Naive thymus-derived CD4-positive, alpha-beta T cell (primary cell): ENCODE measurements at regions of chr7 and their contacts with region 1.

Region 1: GRCh38 chr7:90244909-90245851 is at the start of gene CFAP69:
- DNase-seq: peak; percentile 79 to 88 (median 84)
- ATAC-seq: peak; percentile 95
- H3K4me3 ChIP-seq: peak within 1 kb of the TSS; percentile 70
- H3K4me3 Mint-ChIP-seq: peak within 1 kb of the TSS; percentile 88 to 97 (median 92)
- H3K27ac ChIP-seq: peak within 1 kb of the TSS; percentile 50
- H3K27ac Mint-ChIP-seq: peak within 1 kb of the TSS in 8 of 9 donors; percentile 19 to 90 (median 78)
- H3K4me1 ChIP-seq: peaks cover 6 to 8% of the 10 kb centered on the region in 2 donors
- H3K4me1 Mint-ChIP-seq: peaks cover 8 to 27% (median 15%) of the 10 kb centered on the region in 7 donors
- H3K27me3 ChIP-seq: no peaks in the 10 kb centered on the region
- H3K27me3 Mint-ChIP-seq: peaks cover 11 to 59% (median 28%) of the 10 kb centered on the region in 5 donors
- total RNA-seq, gene CFAP69: 0.30 to 0.80 TPM in 2 of 5 experiments, not detected in the others

Region 2: DNA sequence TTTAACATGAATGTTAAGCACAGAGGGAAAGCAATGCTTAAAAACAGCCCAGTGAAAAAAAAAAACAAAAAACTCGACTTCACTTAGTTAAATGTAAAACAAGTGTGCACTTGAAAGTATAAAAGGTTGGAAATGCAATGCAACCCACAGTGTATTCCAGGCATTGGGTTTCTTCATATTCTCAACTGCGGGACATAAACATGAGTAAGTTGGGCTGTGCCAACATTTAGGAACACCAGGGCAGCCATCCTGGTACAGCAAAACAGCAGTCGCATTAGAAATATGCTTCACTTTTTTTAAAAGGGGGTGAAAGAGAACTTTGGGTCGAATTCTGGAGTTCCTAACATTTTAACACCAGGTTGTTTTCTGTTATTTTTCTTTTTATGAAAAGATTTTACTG is 90.0 kb before region 1 on chr7:
- CTCF ChIA-PET with region 1: no interaction called
- POLR2A ChIA-PET with region 1: no interaction called
- intact Hi-C with region 1: loop called (anchors 5 kb)
- DNase-seq: no peak
- ATAC-seq: no peak
- H3K4me3 ChIP-seq: no peak overlapping the region
- H3K4me3 Mint-ChIP-seq: peak overlapping the region in 3 of 10 donors; percentile 55 to 64 (median 59)
- H3K27ac ChIP-seq: no peak overlapping the region
- H3K27ac Mint-ChIP-seq: no peak overlapping the region
- H3K4me1 ChIP-seq: no peaks in the 10 kb centered on the region
- H3K4me1 Mint-ChIP-seq: peaks cover 0 to 7% (median 2%) of the 10 kb centered on the region in 7 donors
- H3K27me3 ChIP-seq: no peaks in the 10 kb centered on the region
- H3K27me3 Mint-ChIP-seq: peaks cover 11 to 39% (median 30%) of the 10 kb centered on the region in 5 donors

Region 3: DNA sequence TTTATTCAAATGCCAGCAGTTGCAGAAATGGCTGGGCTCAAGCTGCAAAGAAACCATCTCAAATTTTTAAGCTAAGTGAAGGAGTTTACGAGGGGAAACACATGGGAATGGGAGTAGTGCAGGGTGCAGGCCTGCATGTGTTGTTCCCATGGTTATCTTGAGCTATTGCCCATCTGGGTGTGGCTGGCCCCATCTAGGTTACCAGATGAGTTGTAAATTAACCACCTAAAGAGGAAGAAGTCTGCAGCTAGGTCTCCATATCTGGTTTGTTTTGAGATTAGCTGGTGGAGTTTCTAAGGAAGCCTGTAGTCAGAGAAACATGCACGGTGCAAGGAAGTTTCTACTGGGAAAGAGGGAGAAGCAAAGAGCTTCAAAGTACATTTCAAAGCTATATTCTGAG is 56.9 kb before region 1 on chr7:
- CTCF ChIA-PET with region 1: no interaction called
- POLR2A ChIA-PET with region 1: no interaction called
- intact Hi-C with region 1: no loop called
- DNase-seq: no peak
- ATAC-seq: no peak
- H3K4me3 ChIP-seq: no peak overlapping the region
- H3K4me3 Mint-ChIP-seq: no peak overlapping the region
- H3K27ac ChIP-seq: no peak overlapping the region
- H3K27ac Mint-ChIP-seq: no peak overlapping the region
- H3K4me1 ChIP-seq: no peaks in the 10 kb centered on the region
- H3K4me1 Mint-ChIP-seq: no peaks in the 10 kb centered on the region
- H3K27me3 ChIP-seq: no peaks in the 10 kb centered on the region
- H3K27me3 Mint-ChIP-seq: peaks cover 0 to 4% (median 0%) of the 10 kb centered on the region in 5 donors

Region 4: DNA sequence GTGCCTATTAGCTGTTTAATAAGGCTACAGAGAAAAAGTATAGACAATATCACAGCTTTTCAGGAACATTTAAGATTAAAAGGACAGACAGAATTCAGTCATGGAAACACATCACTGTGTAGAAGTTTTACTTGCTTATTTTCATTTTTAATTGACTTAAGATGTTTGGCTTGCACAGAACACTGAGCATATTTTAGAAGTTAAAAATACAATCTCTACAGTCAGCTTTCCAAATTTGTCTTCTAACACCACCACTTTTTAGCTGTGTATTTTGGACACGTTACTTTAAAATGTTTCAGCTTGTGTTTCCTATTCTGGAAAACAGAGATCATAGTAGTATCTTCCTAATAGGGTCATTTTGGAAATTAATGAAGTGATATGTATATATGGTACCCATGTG is 11.6 kb after region 1 on chr7:
- CTCF ChIA-PET with region 1: no interaction called
- POLR2A ChIA-PET with region 1: no interaction called
- intact Hi-C with region 1: loop called in 1 of 2 experiments (anchors 1 kb)
- DNase-seq: no peak
- ATAC-seq: no peak
- H3K4me3 ChIP-seq: no peak overlapping the region
- H3K4me3 Mint-ChIP-seq: no peak overlapping the region
- H3K27ac ChIP-seq: no peak overlapping the region
- H3K27ac Mint-ChIP-seq: no peak overlapping the region
- H3K4me1 ChIP-seq: no peaks in the 10 kb centered on the region
- H3K4me1 Mint-ChIP-seq: no peaks in the 10 kb centered on the region
- H3K27me3 ChIP-seq: no peaks in the 10 kb centered on the region
- H3K27me3 Mint-ChIP-seq: peaks cover 19 to 40% (median 26%) of the 10 kb centered on the region in 5 donors

Region 5: GRCh38 chr7:90262438-90262837 is 17.3 kb after region 1 on chr7:
- CTCF ChIA-PET with region 1: no interaction called
- POLR2A ChIA-PET with region 1: no interaction called
- intact Hi-C with region 1: loop called in 1 of 2 experiments (anchors 2 kb)
- DNase-seq: peak in 1 of 9 donors; percentile 4
- ATAC-seq: no peak
- H3K4me3 ChIP-seq: no peak overlapping the region
- H3K4me3 Mint-ChIP-seq: no peak overlapping the region
- H3K27ac ChIP-seq: no peak overlapping the region
- H3K27ac Mint-ChIP-seq: no peak overlapping the region
- H3K4me1 ChIP-seq: no peaks in the 10 kb centered on the region
- H3K4me1 Mint-ChIP-seq: no peaks in the 10 kb centered on the region
- H3K27me3 ChIP-seq: no peaks in the 10 kb centered on the region
- H3K27me3 Mint-ChIP-seq: peaks cover 6 to 27% (median 13%) of the 10 kb centered on the region in 5 donors

Region 6: GRCh38 chr7:90346336-90347125 is 101.4 kb after region 1 on chr7 and contains the start of gene GTPBP10:
- CTCF ChIA-PET with region 1: no interaction called
- POLR2A ChIA-PET with region 1: no interaction called
- intact Hi-C with region 1: loop called (anchors 1 kb)
- DNase-seq: peak; percentile 88 to 96 (median 94)
- ATAC-seq: peak; percentile 99
- H3K4me3 ChIP-seq: peak within 1 kb of the TSS; percentile 83
- H3K4me3 Mint-ChIP-seq: peak within 1 kb of the TSS; percentile 93 to 99 (median 98)
- H3K27ac ChIP-seq: peak within 1 kb of the TSS; percentile 95
- H3K27ac Mint-ChIP-seq: peak within 1 kb of the TSS; percentile 96 to 100 (median 99)
- H3K4me1 ChIP-seq: peaks cover 13 to 26% of the 10 kb centered on the region in 2 donors
- H3K4me1 Mint-ChIP-seq: peaks cover 23 to 65% (median 53%) of the 10 kb centered on the region in 7 donors
- H3K27me3 ChIP-seq: no peaks in the 10 kb centered on the region
- H3K27me3 Mint-ChIP-seq: peaks cover 0 to 2% (median 0%) of the 10 kb centered on the region in 5 donors
- total RNA-seq, gene GTPBP10: 21.5 to 51.4 (median 29.8) TPM

Region 7: DNA sequence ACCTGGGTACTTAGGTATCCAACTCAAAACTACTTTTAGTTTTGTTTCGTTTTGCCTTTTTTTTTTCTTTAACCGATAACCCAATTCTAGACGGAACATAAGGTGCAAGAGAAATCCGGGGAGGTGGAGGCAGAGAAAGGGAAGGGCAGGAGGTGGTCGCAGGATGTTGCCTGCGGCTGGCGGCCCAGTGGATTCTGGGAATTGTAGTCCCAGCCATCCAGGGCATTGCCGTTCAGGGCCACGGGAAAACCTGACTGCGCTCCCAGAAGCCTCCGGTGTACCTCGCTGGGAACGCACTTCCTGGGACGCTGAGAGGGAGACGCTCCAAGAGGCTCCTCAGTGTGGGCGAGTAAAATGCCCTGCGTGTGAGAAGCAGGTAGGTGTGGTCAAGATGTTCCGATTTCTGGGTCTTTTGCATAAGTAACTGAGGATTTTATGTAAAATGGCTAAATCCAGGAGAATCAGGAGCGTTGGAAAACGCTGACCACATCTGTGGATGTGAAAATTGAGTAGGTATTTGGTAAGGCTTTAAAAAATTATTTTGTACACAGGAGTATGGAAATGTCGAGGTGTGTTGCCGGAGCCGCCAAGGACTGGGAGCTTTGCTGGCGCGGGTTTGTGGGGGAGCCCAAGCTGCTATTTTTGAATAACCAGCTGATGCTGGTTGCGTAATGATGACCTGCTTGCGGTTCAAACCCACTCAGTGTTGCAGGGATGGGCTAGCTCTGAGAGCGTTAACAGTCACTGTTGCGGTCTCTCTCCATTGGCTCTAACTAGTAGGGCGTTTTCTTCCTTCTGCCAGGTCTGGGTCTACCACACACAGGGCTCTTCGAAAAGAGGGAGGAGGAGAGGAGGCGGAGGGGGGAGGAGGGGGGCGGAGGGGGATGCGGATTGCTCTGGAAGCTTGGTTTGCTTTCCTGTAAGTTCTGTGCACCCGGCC is 158.3 kb after region 1 on chr7 and contains the start of gene CLDN12:
- CTCF ChIA-PET with region 1: no interaction called
- POLR2A ChIA-PET with region 1: no interaction called
- intact Hi-C with region 1: loop called (anchors 1 kb)
- DNase-seq: peak; percentile 30 to 91 (median 75)
- ATAC-seq: peak; percentile 99
- H3K4me3 ChIP-seq: peak within 1 kb of the TSS; percentile 81
- H3K4me3 Mint-ChIP-seq: peak within 1 kb of the TSS; percentile 90 to 98 (median 94)
- H3K27ac ChIP-seq: peak within 1 kb of the TSS; percentile 73
- H3K27ac Mint-ChIP-seq: peak within 1 kb of the TSS; percentile 62 to 96 (median 94)
- H3K4me1 ChIP-seq: peaks cover 0 to 6% of the 10 kb centered on the region in 2 donors
- H3K4me1 Mint-ChIP-seq: peaks cover 0 to 24% (median 18%) of the 10 kb centered on the region in 7 donors
- H3K27me3 ChIP-seq: no peaks in the 10 kb centered on the region
- H3K27me3 Mint-ChIP-seq: peaks cover 0 to 18% (median 0%) of the 10 kb centered on the region in 5 donors
- total RNA-seq, gene CLDN12: 0.76 to 3.9 (median 2.0) TPM

Region 8: DNA sequence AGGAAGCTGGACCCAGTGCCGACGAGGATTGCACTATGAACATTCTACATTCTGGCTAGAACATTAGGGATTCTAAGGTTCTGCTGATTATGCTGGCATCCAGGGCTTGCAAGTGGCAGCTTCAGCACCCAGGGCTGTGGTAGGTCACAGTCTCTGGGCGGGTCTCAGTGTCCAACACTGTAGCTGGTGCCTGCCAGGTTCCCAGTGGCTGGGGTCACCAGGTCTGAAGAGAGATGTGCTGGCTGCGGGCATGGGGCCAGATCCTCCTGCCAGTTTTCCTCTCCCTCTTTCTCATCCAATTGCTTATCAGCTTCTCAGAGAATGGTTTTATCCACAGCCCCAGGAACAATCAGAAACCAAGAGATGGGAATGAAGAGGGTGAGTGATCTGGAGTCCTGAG is 224.4 kb after region 1 on chr7 and contains the start of gene PTTG1IP2:
- CTCF ChIA-PET with region 1: no interaction called
- POLR2A ChIA-PET with region 1: no interaction called
- intact Hi-C with region 1: no loop called
- DNase-seq: no peak
- ATAC-seq: no peak
- H3K4me3 ChIP-seq: no peak within 1 kb of the TSS
- H3K4me3 Mint-ChIP-seq: no peak within 1 kb of the TSS
- H3K27ac ChIP-seq: no peak within 1 kb of the TSS
- H3K27ac Mint-ChIP-seq: no peak within 1 kb of the TSS
- H3K4me1 ChIP-seq: no peaks in the 10 kb centered on the region
- H3K4me1 Mint-ChIP-seq: peaks cover 0 to 1% (median 0%) of the 10 kb centered on the region in 7 donors
- H3K27me3 ChIP-seq: peaks cover 0 to 4% of the 10 kb centered on the region in 2 donors
- H3K27me3 Mint-ChIP-seq: peaks cover 4 to 23% (median 11%) of the 10 kb centered on the region in 5 donors
- total RNA-seq, gene PTTG1IP2: not detected